ENCODE measurements at regions of chr14 and their contacts with region 1.

Region 1: DNA sequence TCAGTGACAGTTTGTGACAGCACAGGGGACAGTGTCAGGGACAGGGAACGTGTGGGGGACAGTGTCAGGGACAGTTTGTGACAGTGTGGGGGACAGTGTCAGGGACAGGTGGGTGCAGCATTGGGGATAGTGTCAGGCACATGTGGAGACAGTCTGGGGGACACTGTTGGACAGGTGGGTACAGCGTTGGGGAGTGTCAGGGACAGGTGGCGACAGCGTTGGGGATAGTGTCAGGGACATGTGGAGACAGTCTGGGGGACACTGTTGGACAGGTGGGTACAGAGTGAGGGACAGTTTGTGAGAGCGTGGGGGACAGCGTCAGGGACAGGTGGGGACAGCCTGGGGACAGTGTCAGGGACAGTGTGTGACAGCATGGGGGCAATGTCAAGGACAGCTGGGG is 140.0 kb downstream of the TMEM121 start:
- DNase-seq: no peak
- ATAC-seq: no peak
- H3K4me3 Mint-ChIP-seq: no peak overlapping the region
- H3K27ac Mint-ChIP-seq: no peak overlapping the region
- H3K4me1 Mint-ChIP-seq: peaks cover 14% of the 10 kb centered on the region
- H3K27me3 Mint-ChIP-seq: no peaks in the 10 kb centered on the region
- CTCF ChIP-seq: no peak

Region 2: GRCh38 chr14:105554022-105554421 is 112.4 kb before region 1 on chr14:
- CTCF ChIA-PET with region 1: no interaction called
- POLR2A ChIA-PET with region 1: no interaction called
- intact Hi-C with region 1: loop called (anchors 10 kb)
- DNase-seq: no peak
- ATAC-seq: no peak
- H3K4me3 Mint-ChIP-seq: no peak overlapping the region
- H3K27ac Mint-ChIP-seq: no peak overlapping the region
- H3K4me1 Mint-ChIP-seq: peaks cover 6% of the 10 kb centered on the region
- H3K27me3 Mint-ChIP-seq: no peaks in the 10 kb centered on the region
- CTCF ChIP-seq: no peak

Region 3: DNA sequence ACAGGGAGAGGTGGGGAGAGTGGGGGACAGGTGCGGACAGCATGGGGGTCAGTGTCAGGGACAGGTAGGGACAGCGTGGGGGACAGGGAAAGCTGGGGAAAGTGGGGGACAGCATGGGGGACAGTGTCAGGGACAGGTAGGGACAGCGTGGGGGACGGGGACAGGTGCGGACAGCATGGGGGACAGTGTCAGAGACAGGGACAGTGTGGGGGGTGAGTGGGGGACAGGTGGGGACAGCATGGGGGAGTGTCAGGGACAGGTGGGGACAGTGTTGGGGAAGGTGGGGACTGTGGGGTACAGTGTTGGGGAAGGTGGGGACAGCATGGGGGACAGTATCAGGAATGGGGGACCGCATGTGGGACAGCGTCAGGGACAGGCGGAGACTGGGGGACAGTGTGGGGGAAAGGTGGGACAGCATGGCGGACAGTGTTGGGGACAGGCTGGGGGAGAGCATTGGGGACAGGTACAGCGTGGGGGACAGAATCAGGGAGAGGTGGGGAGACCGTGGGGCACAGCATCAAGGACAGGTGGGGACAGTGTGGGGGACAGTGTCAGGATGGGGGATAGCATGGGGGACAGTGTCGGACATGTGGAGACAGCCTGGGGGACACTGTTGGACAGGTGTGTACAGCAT is 44.0 kb before region 1 on chr14:
- CTCF ChIA-PET with region 1: no interaction called
- POLR2A ChIA-PET with region 1: no interaction called
- intact Hi-C with region 1: loop called (anchors 2 kb)
- DNase-seq: no peak
- ATAC-seq: no peak
- H3K4me3 Mint-ChIP-seq: no peak overlapping the region
- H3K27ac Mint-ChIP-seq: peak overlapping the region; percentile 37
- H3K4me1 Mint-ChIP-seq: peaks cover 1% of the 10 kb centered on the region
- H3K27me3 Mint-ChIP-seq: no peaks in the 10 kb centered on the region
- CTCF ChIP-seq: no peak

Region 4: DNA sequence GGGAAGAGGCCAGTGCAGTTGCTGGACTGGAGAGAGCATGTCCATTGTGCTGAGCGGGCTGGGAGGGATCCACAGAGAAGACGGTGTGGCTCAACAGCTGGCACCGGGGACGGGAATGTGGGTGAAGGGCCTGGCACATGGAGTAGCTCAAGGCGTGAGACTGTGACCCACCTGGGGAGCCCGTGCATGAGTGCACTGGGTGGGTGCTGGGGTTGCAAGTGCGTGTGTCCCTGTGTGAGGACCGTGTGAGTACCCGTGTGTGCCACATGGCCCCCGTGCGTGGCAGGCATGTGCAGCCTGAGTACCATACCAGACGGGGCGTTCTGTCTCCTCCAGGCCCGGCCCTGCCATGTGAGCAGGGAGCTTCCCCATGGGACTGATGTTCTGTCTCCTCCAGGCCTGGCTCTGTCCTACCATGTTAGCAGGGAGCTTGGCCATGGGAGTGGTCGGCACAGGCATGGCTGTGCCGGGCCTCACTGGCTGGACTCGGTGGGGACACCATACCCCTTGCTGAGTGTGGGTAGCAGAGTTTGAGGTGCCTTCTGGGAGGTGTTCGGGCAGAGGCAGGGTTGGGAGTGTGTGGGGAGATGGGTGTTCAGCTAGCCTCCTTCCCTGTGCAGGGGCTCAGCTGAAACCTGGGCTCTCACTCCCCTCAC is 94.4 kb after region 1 on chr14:
- CTCF ChIA-PET with region 1: no interaction called
- POLR2A ChIA-PET with region 1: no interaction called
- intact Hi-C with region 1: no loop called
- DNase-seq: no peak
- ATAC-seq: peak; percentile 14
- H3K4me3 Mint-ChIP-seq: no peak overlapping the region
- H3K27ac Mint-ChIP-seq: peak overlapping the region; percentile 63
- H3K4me1 Mint-ChIP-seq: peaks cover 4% of the 10 kb centered on the region
- H3K27me3 Mint-ChIP-seq: no peaks in the 10 kb centered on the region
- CTCF ChIP-seq: no peak

Region 5: DNA sequence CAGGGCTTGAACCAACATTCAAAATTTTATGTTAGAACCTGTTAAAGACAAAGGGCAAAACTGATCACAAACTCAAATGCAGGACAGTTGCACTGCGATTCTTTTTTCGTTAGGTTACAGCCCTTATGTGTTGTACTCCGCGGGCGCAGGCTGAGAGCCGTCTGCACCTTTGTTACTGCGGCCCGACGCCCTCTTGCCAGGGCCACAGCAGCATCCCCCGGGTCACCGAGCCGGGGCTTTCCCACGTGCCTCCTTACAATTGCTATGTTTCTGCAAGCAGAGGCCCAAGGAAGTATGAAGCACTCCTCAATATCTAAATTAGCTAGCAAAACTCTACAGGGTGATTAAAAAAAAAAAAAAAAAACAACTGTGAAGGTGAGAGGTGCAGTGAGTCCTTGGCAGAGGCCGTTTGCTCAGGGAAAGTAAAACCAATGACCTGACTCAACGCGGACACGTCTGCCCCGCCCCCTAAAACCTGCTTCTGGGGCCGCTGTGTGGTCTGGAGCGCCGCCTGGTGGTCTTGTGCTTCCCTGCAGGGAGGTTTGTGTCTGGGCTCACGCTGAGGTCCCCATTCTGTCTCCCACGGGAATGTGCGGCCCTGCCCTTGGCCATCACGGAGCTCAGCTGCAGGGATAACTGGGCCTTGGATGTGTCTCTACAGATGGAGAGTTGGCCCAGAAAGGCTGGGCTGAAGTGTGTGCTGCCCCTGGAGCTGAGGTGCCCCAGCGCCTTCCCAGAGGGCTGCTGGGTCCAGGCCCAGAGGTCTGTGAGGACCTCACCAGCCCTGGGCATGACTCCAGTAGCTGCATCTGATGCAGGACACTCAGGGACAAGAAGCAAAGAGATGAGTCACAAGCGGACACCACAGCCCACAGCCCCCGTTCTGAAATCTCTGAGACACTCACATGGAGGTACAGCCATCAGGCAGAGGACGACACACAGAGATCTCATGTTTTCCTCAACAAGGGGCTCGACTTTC is 278.5 kb after region 1 on chr14:
- CTCF ChIA-PET with region 1: no interaction called
- POLR2A ChIA-PET with region 1: no interaction called
- intact Hi-C with region 1: loop called (anchors 10 kb)
- DNase-seq: peak; percentile 53
- ATAC-seq: peak; percentile 70
- H3K4me3 Mint-ChIP-seq: peak overlapping the region; percentile 24
- H3K27ac Mint-ChIP-seq: peak overlapping the region; percentile 46
- H3K4me1 Mint-ChIP-seq: peaks cover 42% of the 10 kb centered on the region
- H3K27me3 Mint-ChIP-seq: no peaks in the 10 kb centered on the region
- CTCF ChIP-seq: no peak

Region 6: DNA sequence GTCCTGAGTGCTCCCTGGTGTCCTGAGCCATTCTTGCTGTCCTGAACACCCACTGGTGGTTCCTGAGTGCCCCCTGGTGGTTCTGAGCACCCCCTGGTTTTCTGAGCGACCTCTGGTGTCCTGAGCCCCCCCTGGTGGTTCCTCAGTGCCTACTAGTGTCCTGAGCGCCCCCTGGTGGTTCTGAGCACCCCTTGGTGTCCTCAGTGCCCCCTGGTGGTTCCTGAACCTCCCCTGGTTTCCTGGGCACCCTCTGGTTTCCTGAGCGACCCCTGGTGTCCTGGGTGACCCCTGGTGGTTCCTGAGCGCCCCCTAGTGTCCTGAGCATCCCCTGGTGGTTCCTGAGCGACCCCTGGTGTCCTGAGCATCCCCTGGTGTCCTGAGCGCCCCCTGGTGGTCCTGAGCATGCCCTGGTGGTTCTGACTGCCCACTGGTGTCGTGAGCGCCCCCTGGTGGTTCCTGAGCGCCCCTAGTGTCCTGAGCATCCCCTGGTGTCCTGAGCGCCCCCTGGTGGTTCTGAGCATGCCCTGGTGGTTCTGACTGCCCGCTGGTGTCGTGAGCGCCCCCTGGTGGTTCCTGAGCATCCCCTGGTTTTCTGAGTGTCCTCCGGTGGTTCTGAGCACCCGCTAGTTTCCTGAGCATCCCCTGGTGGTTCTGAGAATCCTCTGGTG is 333.1 kb after region 1 on chr14:
- CTCF ChIA-PET with region 1: no interaction called
- POLR2A ChIA-PET with region 1: no interaction called
- intact Hi-C with region 1: loop called (anchors 10 kb)
- DNase-seq: peak; percentile 25
- ATAC-seq: peak; percentile 82
- H3K4me3 Mint-ChIP-seq: no peak overlapping the region
- H3K27ac Mint-ChIP-seq: no peak overlapping the region
- H3K4me1 Mint-ChIP-seq: peaks cover 11% of the 10 kb centered on the region
- H3K27me3 Mint-ChIP-seq: no peaks in the 10 kb centered on the region
- CTCF ChIP-seq: no peak